RWPE1 (cell line): ENCODE measurements at regions of chr6 and their contacts with region 1.

Region 1: GRCh38 chr6:90203672-90204071 is 93.0 kb downstream of the BACH2 start:
- DNase-seq: no peak
- H3K27ac ChIP-seq: no peak overlapping the region
- CTCF ChIP-seq: no peak

Region 2: DNA sequence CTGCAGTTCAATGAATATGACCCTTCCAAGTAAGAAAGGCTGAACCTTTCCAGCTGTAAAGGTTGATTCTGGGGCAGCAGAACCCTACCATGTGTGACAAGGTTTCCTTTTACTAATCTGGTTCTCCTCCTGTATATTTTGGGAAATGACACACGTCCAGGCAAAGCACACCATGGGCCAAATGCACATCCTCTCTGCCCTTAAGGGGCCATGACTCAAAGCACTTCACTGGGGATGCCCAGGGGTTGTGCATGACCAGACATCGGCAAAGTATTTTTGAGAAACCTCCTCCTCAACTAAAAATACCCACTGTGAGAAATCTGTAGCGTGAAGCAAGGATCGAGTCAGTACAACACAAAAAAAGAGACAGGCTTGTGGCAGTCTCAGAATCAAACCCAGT is 81.7 kb before region 1 on chr6:
- CTCF ChIA-PET with region 1: no interaction called
- POLR2A ChIA-PET with region 1: no interaction called
- DNase-seq: peak; percentile 54
- H3K27ac ChIP-seq: no peak overlapping the region
- CTCF ChIP-seq: no peak

Region 3: DNA sequence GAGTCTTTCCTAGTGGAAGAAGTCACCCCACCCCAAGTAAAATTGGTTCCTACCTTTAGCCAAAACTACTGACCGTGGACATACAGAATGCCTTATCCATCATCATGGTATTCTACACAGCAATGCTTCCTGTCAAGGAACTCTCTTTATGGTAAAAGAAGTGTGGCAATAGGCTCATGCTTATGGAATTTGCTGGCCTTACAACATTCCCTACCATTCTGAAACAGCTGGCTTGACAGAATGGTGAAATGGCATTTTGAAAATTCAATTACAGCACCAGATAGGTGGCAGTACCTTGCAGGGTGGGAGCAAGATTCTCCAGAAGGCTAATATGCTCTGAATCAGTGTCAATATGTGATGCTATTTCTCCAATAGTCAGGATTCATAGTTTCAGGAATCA is 134.8 kb after region 1 on chr6:
- CTCF ChIA-PET with region 1: interaction called, 10 read pairs
- POLR2A ChIA-PET with region 1: no interaction called
- DNase-seq: no peak
- H3K27ac ChIP-seq: no peak overlapping the region
- CTCF ChIP-seq: no peak